ENCODE measurements at regions of chr4 and their contacts with region 1.

Region 1: DNA sequence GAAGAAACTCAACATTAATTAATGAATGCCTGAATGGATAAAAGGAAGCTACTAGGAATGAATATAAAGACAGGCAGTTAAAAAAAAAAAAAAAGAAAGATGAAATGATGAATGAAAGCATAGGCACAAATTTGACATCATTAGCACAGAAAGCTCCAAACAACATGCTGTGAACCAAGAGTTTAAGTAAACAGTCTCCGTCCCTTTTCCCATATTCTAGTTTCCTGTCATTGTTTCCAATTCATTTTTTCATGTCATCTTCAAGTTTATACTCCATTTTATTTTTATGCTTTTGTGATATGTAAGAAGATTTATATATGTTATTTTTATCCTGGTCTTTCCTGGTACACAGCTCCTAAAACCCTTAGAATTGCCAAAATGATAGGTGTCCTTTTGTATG is 17.7 kb upstream of the AASDH start:
- DNase-seq: no peak
- CTCF ChIP-seq: no peak

Region 2: GRCh38 chr4:56387023-56388001 is 17.7 kb before region 1 on chr4 and contains the start of gene AASDH:
- CTCF ChIA-PET with region 1: interaction called, 10 read pairs
- POLR2A ChIA-PET with region 1: no interaction called
- DNase-seq: peak; percentile 91
- CTCF ChIP-seq: no peak

Measured in GM10248 (cell line).